Activated naive CD8-positive, alpha-beta T cell treated with anti-CD3 and anti-CD28 coated beads, Interleukin-2, amount 10 ng/mL, durations not matched to agents 7 days and 5 days (primary cell): ENCODE measurements at regions of chr6 and their contacts with region 1.

Region 1: DNA sequence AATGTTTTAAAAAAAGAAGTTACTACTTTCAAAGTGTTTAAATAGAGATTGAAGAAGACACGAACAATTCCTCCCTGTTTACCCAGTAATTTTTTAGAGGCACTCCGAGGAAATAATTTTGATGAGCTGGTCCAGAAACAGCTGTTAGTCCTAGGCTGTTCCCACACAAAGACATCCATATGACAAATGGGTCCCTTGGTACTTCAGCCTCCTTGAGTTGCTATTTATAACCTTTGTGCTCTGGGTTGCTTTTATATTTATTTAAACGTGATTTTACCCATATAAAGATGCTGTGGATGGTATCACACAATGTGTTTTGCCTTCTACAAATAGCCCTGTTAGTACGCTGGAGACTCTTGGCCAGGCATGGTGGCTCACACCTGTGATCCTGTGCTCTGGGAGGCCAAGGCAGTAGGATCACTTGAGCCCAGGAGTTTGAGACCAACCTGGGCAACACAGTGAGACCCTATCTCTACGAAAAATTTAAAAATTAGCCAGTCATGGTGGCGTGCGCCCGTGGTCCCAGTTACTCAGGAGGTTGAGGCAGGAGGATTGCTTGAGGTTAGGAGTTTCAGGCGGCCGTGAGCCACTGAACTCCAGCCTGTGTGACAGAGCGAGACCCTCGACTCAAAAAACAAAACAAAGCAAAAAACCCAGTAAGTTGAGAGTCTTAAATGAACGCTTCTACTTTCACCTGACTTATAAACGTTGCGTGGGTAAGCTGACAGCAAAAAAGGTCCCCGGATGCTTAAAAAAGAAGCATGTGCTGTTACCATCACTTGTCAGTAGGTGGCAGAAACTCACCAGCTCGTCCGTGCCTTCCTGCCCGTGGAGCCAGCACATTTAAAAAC is 56.9 kb upstream of the ARMH2 start:
- DNase-seq: no peak
- ATAC-seq: peak; percentile 25
- H3K4me3 Mint-ChIP-seq: peak overlapping the region; percentile 37
- H3K27ac Mint-ChIP-seq: peak overlapping the region; percentile 84
- H3K4me1 Mint-ChIP-seq: peaks cover 48% of the 10 kb centered on the region
- H3K27me3 Mint-ChIP-seq: no peaks in the 10 kb centered on the region

Region 2: DNA sequence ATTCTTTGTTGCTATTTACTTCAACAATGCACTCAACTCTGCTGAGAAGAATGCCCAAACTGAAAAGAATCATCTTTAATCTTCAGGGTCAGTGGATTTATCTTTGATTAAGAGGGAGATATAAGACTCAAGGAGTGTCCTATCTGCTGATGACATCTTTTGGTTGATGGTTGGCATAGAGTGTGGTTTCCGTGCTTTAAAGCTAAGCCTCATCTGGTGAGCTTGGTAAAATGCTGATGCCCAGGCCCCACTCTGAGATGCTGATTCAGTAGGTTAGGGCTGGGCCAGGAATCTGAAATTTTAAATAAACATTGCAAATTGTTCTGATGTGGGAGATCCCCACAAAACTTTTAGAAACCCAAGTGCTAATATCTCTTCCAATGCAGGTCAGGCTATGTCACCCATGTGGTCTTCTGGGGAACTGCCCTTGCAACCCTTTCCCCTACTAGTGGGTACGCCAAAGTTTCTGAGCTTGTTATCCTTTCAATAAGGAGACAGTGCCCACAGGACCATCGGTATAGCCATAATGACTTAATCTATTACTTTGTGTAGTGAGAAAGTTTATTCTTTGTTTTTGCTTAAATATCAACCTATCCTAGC is 11.6 kb after region 1 on chr6:
- POLR2A ChIA-PET with region 1: no interaction called
- DNase-seq: no peak
- ATAC-seq: no peak
- H3K4me3 Mint-ChIP-seq: no peak overlapping the region
- H3K27ac Mint-ChIP-seq: no peak overlapping the region
- H3K4me1 Mint-ChIP-seq: peaks cover 32% of the 10 kb centered on the region
- H3K27me3 Mint-ChIP-seq: no peaks in the 10 kb centered on the region

Region 3: DNA sequence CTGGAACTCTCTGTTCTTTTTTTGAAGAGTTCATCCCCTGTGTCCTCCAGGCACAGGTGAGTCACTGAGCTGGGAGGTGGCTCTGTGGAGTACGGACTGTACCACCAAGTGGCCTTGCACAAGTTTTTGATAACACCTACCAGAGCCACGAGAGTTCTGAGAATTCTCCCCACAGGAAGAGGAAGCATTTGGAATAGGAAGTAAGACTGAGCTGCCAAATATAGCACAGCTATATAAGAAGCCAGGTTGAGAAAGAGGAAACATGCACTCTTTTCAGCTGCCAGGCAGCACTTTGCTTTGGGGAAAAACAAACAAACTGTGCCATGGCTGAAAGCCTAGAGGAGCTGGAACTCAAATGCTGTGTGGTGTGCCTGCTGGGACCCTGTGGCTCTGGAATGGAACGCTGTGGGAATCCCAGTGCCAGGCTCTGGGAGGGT is 151.0 kb after region 1 on chr6:
- POLR2A ChIA-PET with region 1: interaction called, 11 read pairs
- DNase-seq: peak; percentile 51
- ATAC-seq: peak; percentile 88
- H3K4me3 Mint-ChIP-seq: peak overlapping the region; percentile 85
- H3K27ac Mint-ChIP-seq: peak overlapping the region; percentile 100
- H3K4me1 Mint-ChIP-seq: peaks cover 58% of the 10 kb centered on the region
- H3K27me3 Mint-ChIP-seq: no peaks in the 10 kb centered on the region

Region 4: GRCh38 chr6:25017932-25018567 is 162.4 kb after region 1 on chr6:
- POLR2A ChIA-PET with region 1: interaction called, 15 read pairs
- DNase-seq: peak; percentile 72
- ATAC-seq: peak; percentile 84
- H3K4me3 Mint-ChIP-seq: peak overlapping the region; percentile 10
- H3K27ac Mint-ChIP-seq: peak overlapping the region; percentile 47
- H3K4me1 Mint-ChIP-seq: peaks cover 31% of the 10 kb centered on the region
- H3K27me3 Mint-ChIP-seq: no peaks in the 10 kb centered on the region